Gastrocnemius medialis (tissue), 4 donors: ENCODE measurements at regions of chr19 and their contacts with region 1.

Region 1: GRCh38 chr19:1020868-1021425 is at the start of gene TMEM259:
- DNase-seq: peak; percentile 97 to 98
- ATAC-seq: peak; percentile 79 to 85
- H3K4me3 ChIP-seq: peak within 1 kb of the TSS; percentile 86 to 99 (median 90)
- H3K27ac ChIP-seq: peak within 1 kb of the TSS; percentile 89 to 94 (median 91)
- H3K4me1 ChIP-seq: peaks cover 40 to 48% of the 10 kb centered on the region in 2 donors
- H3K27me3 ChIP-seq: peaks cover 3 to 9% (median 8%) of the 10 kb centered on the region in 3 donors
- CTCF ChIP-seq: peak in 1 of 5 experiments; percentile 27
- POLR2A ChIP-seq: peak; percentile 77 to 85
- total RNA-seq, gene TMEM259: 98.5 to 150 (median 124) TPM

Region 2: GRCh38 chr19:584240-585001 is 436.5 kb before region 1 on chr19:
- in situ Hi-C with region 1: no loop called
- intact Hi-C with region 1: loop called (anchors 5 kb)
- DNase-seq: no peak
- ATAC-seq: peak; percentile 61 to 64
- H3K4me3 ChIP-seq: no peak overlapping the region
- H3K27ac ChIP-seq: no peak overlapping the region
- H3K4me1 ChIP-seq: peaks cover 0 to 5% of the 10 kb centered on the region in 2 donors
- H3K27me3 ChIP-seq: peaks cover 16 to 17% (median 17%) of the 10 kb centered on the region in 3 donors
- CTCF ChIP-seq: peak; percentile 80 to 89 (median 83)
- POLR2A ChIP-seq: no peak

Region 3: GRCh38 chr19:1039646-1040475 is 18.9 kb after region 1 on chr19 and contains the start of gene ABCA7:
- in situ Hi-C with region 1: no loop called
- intact Hi-C with region 1: loop called (anchors 1 kb)
- DNase-seq: peak; percentile 98 to 99
- ATAC-seq: peak; percentile 78 to 79
- H3K4me3 ChIP-seq: peak within 1 kb of the TSS; percentile 53 to 68 (median 58)
- H3K27ac ChIP-seq: peak within 1 kb of the TSS; percentile 79 to 87 (median 82)
- H3K4me1 ChIP-seq: peaks cover 25 to 29% of the 10 kb centered on the region in 2 donors
- H3K27me3 ChIP-seq: no peaks in the 10 kb centered on the region
- CTCF ChIP-seq: no peak
- POLR2A ChIP-seq: peak; percentile 94 to 96
- total RNA-seq, gene ABCA7: 6.0 to 20.0 (median 15.0) TPM

Region 4: DNA sequence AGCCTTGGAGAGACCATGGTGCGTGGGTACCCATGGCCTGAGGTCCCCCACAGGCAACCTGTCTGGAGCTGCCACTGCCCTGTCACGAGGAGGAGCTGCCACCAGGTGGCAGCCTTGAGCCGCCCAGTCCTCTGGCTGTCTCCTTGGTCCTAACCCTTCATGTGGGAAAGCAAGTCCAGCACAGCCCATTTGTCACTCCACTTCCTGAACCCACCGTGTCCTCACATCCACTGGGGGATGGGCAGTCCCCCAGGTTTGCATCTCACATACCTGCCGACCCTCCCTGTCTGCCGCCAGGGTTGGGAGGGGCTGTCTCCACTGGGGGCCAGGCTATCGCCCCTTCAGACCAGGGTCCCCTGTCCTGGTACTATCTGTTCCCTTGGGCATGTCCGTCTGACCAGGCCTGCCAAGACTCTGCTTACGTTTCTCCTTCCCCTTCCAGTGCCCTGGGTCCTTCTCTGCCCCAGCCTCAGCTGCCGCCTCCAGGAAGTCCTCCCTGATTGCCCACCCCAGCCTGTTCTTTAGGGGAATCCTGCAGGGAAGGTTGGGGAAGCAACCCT is 258.9 kb after region 1 on chr19:
- in situ Hi-C with region 1: no loop called
- intact Hi-C with region 1: no loop called
- DNase-seq: peak in 1 of 2 donors; percentile 78
- ATAC-seq: peak; percentile 34 to 35
- H3K4me3 ChIP-seq: no peak overlapping the region
- H3K27ac ChIP-seq: peak overlapping the region in 1 of 4 donors; percentile 39
- H3K4me1 ChIP-seq: peaks cover 14% of the 10 kb centered on the region in 2 donors
- H3K27me3 ChIP-seq: peaks cover 17 to 19% (median 19%) of the 10 kb centered on the region in 3 donors
- CTCF ChIP-seq: peak; percentile 76 to 96 (median 92)
- POLR2A ChIP-seq: no peak